Activated CD4-positive, alpha-beta memory T cell treated with anti-CD3 and anti-CD28 coated beads for 36 hours (primary cell): ENCODE measurements at regions of chr10 and their contacts with region 1.

Region 1: GRCh38 chr10:5732141-5732540 is 47.5 kb downstream of the TASOR2 start:
- DNase-seq: no peak
- H3K4me3 Mint-ChIP-seq: no peak overlapping the region
- H3K27ac Mint-ChIP-seq: peak overlapping the region; percentile 38
- H3K4me1 Mint-ChIP-seq: peaks cover 24% of the 10 kb centered on the region
- H3K27me3 Mint-ChIP-seq: no peaks in the 10 kb centered on the region

Region 2: GRCh38 chr10:4839401-4839800 is 892.7 kb before region 1 on chr10:
- CTCF ChIA-PET with region 1: no interaction called
- POLR2A ChIA-PET with region 1: no interaction called
- intact Hi-C with region 1: no loop called
- DNase-seq: no peak
- H3K4me3 Mint-ChIP-seq: no peak overlapping the region
- H3K27ac Mint-ChIP-seq: no peak overlapping the region
- H3K4me1 Mint-ChIP-seq: peaks cover 25% of the 10 kb centered on the region
- H3K27me3 Mint-ChIP-seq: no peaks in the 10 kb centered on the region

Region 3: DNA sequence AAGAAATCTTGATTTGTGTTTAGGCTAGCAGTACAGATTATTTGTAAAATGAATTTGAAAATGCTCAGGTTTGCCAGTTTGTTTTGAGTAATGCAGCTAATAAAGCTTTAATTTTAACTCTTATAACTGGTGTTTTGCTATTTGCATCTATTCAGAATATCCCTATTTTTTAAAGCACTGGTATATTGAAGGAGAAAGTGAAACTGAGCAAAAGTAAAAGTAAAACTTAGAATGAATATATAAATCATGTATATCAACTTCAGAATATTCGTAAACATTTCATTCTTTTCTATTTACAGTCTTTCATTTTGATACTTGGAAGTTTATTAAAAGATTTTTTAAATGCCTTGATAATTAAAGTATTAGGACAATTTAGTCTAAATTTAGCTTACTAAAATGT is 21.3 kb before region 1 on chr10:
- CTCF ChIA-PET with region 1: no interaction called
- POLR2A ChIA-PET with region 1: no interaction called
- intact Hi-C with region 1: loop called (anchors 2 kb)
- DNase-seq: no peak
- H3K4me3 Mint-ChIP-seq: no peak overlapping the region
- H3K27ac Mint-ChIP-seq: no peak overlapping the region
- H3K4me1 Mint-ChIP-seq: peaks cover 58% of the 10 kb centered on the region
- H3K27me3 Mint-ChIP-seq: no peaks in the 10 kb centered on the region